Left cardiac atrium (tissue), 4 donors: ENCODE measurements at regions of chr6 and their contacts with region 1.

Region 1: GRCh38 chr6:42043787-42044475 is 6.4 kb upstream of the TAF8 start:
- DNase-seq: peak; percentile 85
- ATAC-seq: peak; percentile 61 to 74

Region 2: DNA sequence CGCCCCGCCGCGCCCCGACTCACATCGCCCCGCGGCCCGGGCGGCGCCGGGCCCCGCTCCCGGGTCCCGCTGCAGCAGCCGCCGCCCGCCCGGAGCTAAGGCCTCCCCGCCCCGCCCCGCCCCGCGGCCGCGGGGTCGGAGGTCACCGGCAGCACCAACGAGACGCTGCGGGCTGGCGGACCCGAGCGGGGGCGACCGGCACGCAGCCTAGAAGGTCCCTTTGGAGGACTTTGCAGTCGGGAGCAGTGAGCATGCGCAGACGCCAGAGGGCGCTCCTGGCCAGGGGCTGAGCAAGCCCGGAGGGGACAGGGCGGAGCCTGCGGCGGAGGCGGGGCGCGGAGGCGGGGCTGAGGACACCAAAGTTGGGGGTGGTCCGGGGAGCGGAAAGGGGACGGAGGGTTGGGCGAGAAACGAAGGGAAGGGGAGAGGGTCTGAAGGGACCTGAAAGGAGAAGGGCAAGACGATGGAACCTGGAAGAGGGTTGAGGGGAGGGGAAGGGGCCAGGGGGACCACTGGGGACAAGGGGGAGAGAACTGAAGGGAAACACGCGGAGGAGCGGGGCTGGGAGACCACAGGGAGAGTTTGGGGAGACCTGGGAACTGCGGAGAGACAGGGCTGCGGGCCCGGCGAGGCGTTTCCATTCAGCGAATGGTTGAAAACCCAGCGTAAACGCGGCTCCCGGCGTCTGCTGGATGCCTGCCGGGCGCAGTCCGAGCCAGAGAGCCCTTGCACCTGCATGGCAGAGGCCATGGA is 264.0 kb before region 1 on chr6 and contains the start of gene FRS3:
- intact Hi-C with region 1: loop called (anchors 2 to 5 kb)
- DNase-seq: peak; percentile 98
- ATAC-seq: peak; percentile 92 to 96
- total RNA-seq, gene FRS3: 4.0 to 5.2 TPM

Region 3: GRCh38 chr6:41846666-41847237 is 197.2 kb before region 1 on chr6:
- intact Hi-C with region 1: loop called (anchors 1 to 5 kb)
- DNase-seq: peak; percentile 31
- ATAC-seq: peak; percentile 87 to 95

Region 4: DNA sequence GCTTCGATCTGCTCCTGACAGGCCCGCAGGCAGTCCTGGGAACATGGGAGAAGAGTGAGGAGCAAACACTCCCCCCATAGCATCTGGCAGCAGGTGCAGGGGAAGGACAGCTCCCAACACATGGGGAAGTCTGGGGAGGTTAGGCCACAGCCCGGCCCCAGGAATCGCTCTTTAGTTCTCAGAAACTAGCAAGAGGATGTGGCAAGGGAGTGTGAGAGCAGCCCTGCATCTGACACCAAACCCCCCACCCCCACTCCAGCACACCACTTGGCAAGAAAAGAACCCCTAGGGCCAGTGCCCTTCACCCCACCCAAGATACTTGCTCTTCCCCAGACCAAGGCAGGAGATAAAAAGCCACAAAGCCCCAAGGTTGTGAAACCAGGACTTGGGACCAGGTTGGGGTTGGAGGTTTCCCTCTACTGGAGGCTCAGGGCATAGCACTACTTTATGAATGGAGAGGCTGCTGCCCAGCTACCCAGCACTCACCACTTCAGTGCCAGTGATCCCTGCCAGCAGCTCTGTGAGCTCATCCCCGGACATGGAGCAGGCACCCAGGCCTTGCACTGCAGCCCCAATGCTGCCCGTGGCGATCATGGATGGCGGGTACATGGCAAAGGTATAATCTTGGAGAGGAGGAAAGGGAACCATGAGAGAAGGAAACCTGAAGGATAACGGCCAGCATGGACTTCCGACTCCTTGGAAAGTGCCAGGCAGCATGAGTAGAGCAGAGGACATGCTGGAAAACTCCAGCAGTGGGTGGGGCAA is 107.7 kb before region 1 on chr6:
- intact Hi-C with region 1: loop called (anchors 2 to 10 kb)
- DNase-seq: peak; percentile 71
- ATAC-seq: peak; percentile 54 to 72